ENCODE measurements at regions of chr1 and their contacts with region 1.

Region 1: GRCh38 chr1:160837558-160838205 is 25.0 kb downstream of the CD244 start:
- DNase-seq: peak in 1 of 2 donors; percentile 40
- ATAC-seq: peak in 7 of 8 donors; percentile 58 to 70 (median 64)
- H3K4me3 ChIP-seq: no peak overlapping the region
- H3K27ac ChIP-seq: peak overlapping the region in 2 of 10 donors; percentile 37 to 73
- H3K4me1 ChIP-seq: peaks cover 0 to 44% (median 3%) of the 10 kb centered on the region in 9 donors
- H3K27me3 ChIP-seq: peaks cover 0 to 14% (median 0%) of the 10 kb centered on the region in 7 donors
- CTCF ChIP-seq: peak in 3 of 9 donors; percentile 11 to 33 (median 13)

Region 2: GRCh38 chr1:160987359-160988062 is 149.8 kb after region 1 on chr1:
- intact Hi-C with region 1: loop called in 2 of 10 experiments (anchors 5 kb)
- DNase-seq: no peak
- ATAC-seq: no peak
- H3K4me3 ChIP-seq: no peak overlapping the region
- H3K27ac ChIP-seq: no peak overlapping the region
- H3K4me1 ChIP-seq: peaks cover 0 to 11% (median 4%) of the 10 kb centered on the region in 9 donors
- H3K27me3 ChIP-seq: peaks cover 0 to 14% (median 8%) of the 10 kb centered on the region in 7 donors
- CTCF ChIP-seq: no peak

Region 3: GRCh38 chr1:160997323-160998038 is 159.8 kb after region 1 on chr1:
- intact Hi-C with region 1: loop called in 1 of 10 experiments (anchors 5 kb)
- DNase-seq: peak; percentile 45 to 83
- ATAC-seq: peak; percentile 89 to 95 (median 92)
- H3K4me3 ChIP-seq: no peak overlapping the region
- H3K27ac ChIP-seq: peak overlapping the region in 9 of 10 donors; percentile 47 to 82 (median 75)
- H3K4me1 ChIP-seq: peaks cover 0 to 30% (median 12%) of the 10 kb centered on the region in 9 donors
- H3K27me3 ChIP-seq: no peaks in the 10 kb centered on the region
- CTCF ChIP-seq: peak; percentile 43 to 83 (median 68)